HEK293T (cell line): ENCODE measurements at regions of chr16 and their contacts with region 1.

Region 1: GRCh38 chr16:69754469-69755310 is at the start of gene NOB1:
- DNase-seq: peak; percentile 97

Region 2: GRCh38 chr16:69396187-69397061 is 358.3 kb before region 1 on chr16:
- CTCF ChIA-PET with region 1: interaction called, 3 read pairs
- POLR2A ChIA-PET with region 1: interaction called, 14 read pairs
- DNase-seq: peak; percentile 68

Region 3: GRCh38 chr16:69709456-69710084 is 45.1 kb before region 1 on chr16:
- CTCF ChIA-PET with region 1: interaction called, 3 read pairs
- POLR2A ChIA-PET with region 1: interaction called, 10 read pairs
- DNase-seq: peak; percentile 54

Region 4: GRCh38 chr16:69726296-69727060 is 28.2 kb before region 1 on chr16 and contains the start of gene NQO1:
- CTCF ChIA-PET with region 1: interaction called, 6 read pairs
- POLR2A ChIA-PET with region 1: interaction called, 25 read pairs
- DNase-seq: peak; percentile 93